ENCODE measurements at regions of chr1 and their contacts with region 1.

Region 1: GRCh38 chr1:27102707-27103491 is 52.0 kb downstream of the SLC9A1 start:
- DNase-seq: peak; percentile 40
- ATAC-seq: peak; percentile 76
- H3K4me3 ChIP-seq: no peak overlapping the region
- H3K27ac ChIP-seq: no peak overlapping the region
- H3K4me1 ChIP-seq: peaks cover 16% of the 10 kb centered on the region
- H3K27me3 ChIP-seq: no peaks in the 10 kb centered on the region
- CTCF ChIP-seq: peak; percentile 96
- POLR2A ChIP-seq: 0 out of 2 replicates have a peak, but pooled peaks have one; percentile 24
- RAD21 ChIP-seq: peak; percentile 96

Region 2: DNA sequence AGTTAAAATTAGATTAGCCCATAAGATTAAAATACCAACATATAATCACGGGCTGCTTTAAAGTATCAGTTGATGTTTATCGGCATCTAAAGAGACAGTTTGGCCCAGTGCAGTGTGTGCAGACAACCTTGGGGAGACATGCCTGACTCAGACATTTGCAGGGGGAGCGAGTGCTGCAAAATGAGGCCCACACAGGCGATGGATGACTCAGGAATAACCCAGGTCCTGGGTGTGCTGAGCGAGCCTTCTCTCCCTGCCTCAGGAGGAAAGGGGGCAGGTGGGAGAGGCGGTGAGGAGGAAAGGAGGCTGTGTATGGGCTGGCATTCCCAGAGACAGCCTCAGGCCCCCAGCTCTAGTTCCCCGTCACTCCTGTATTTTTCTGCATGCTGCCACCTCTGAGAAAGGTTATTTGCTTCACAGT is 43.0 kb after region 1 on chr1:
- CTCF ChIA-PET with region 1: no interaction called
- POLR2A ChIA-PET with region 1: no interaction called
- dilution Hi-C with region 1: no loop called
- in situ Hi-C with region 1: no loop called
- intact Hi-C with region 1: no loop called
- DNase-seq: peak; percentile 94
- ATAC-seq: peak; percentile 97
- H3K4me3 ChIP-seq: no peak overlapping the region
- H3K27ac ChIP-seq: peak overlapping the region; percentile 68; the same call in 1 of the 2 replicates
- H3K4me1 ChIP-seq: peaks cover 18% of the 10 kb centered on the region
- H3K27me3 ChIP-seq: no peaks in the 10 kb centered on the region
- CTCF ChIP-seq: no peak
- POLR2A ChIP-seq: no peak; the same call in 1 of the 2 replicates
- RAD21 ChIP-seq: peak; percentile 30; the same call in 1 of the 2 replicates

Region 3: DNA sequence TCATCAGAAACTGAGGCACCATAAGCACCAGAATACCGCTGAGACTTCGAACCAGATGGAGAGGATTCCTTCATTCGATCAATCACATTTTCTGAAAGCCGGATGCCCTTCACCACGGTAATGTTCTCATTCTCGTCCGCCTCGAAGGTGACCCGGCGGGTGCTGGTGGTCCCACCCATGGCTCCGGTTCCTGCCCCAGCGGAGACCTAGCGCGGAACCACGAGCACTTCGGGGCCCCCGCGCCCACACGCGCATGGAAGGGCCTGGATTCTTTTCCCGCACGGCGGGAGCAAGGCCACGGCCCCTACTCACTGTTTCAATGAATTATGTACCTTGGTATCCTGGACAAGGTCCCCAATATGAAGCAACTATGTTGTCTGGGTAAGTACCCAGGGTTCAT is 98.4 kb after region 1 on chr1:
- CTCF ChIA-PET with region 1: interaction called, 3 read pairs
- POLR2A ChIA-PET with region 1: no interaction called
- dilution Hi-C with region 1: no loop called
- in situ Hi-C with region 1: no loop called
- intact Hi-C with region 1: loop called (anchors 1 kb)
- DNase-seq: no peak
- ATAC-seq: no peak
- H3K4me3 ChIP-seq: no peak overlapping the region
- H3K27ac ChIP-seq: no peak overlapping the region
- H3K4me1 ChIP-seq: peaks cover 2% of the 10 kb centered on the region; the same call in 1 of the 2 replicates
- H3K27me3 ChIP-seq: peaks cover 18% of the 10 kb centered on the region
- CTCF ChIP-seq: no peak
- POLR2A ChIP-seq: no peak
- RAD21 ChIP-seq: no peak

Region 4: DNA sequence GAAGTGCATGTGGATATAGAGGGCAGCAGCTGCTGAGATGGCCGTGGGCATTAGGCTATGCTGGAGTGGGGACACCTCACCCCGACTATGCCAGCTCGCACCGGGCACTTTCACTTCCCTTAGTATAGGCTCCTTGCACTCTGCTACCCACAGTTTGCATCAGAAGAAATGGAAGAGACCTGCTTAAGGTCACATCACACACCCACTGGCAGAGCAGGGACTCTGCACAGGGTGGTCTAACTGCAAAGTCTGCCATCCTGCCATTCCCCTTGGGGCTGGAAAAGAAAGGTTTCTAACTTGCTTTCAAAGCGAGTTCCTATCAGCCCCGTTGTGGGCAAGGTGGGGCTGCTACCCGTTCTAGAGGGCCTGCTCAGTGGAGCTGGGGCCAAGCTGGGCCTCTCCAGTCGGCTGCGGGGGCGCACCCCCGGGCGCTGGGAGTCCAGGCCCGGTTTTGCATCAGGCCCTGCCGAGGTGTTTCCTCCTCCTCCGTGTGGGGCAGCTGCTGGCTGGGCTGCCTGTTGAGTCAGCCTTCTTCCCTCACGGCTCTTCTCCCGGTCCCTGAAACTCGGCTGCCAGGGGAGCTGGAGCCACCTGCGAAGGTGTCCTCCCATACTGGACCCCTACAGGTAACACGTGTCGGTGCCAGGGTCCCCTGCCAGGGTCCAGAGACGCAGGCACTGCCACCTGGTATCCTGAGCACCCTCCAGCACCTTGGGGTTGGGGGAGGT is 238.8 kb after region 1 on chr1 and contains the start of gene SYTL1:
- CTCF ChIA-PET with region 1: no interaction called
- POLR2A ChIA-PET with region 1: no interaction called
- dilution Hi-C with region 1: no loop called
- in situ Hi-C with region 1: no loop called
- intact Hi-C with region 1: no loop called
- DNase-seq: peak; percentile 67
- ATAC-seq: peak; percentile 92
- H3K4me3 ChIP-seq: no peak within 1 kb of the TSS
- H3K27ac ChIP-seq: no peak within 1 kb of the TSS
- H3K4me1 ChIP-seq: peaks cover 14% of the 10 kb centered on the region
- H3K27me3 ChIP-seq: no peaks in the 10 kb centered on the region
- CTCF ChIP-seq: no peak
- POLR2A ChIP-seq: no peak
- RAD21 ChIP-seq: no peak
- total RNA-seq, gene SYTL1: 0.18 and 0.28 TPM in 2 replicates